K562 (cell line): ENCODE measurements at regions of chr11 and their contacts with region 1.

Region 1: GRCh38 chr11:118374729-118375128 is 15.3 kb downstream of the UBE4A start:
- DNase-seq: no peak
- ATAC-seq: no peak
- H3K4me3 ChIP-seq: no peak overlapping the region
- H3K27ac ChIP-seq: no peak overlapping the region
- H3K4me1 ChIP-seq: peaks cover 0 to 6% of the 10 kb centered on the region in 2 experiments; a peak in 2 of 5 replicates
- H3K27me3 ChIP-seq: no peaks in the 10 kb centered on the region
- CTCF ChIP-seq: no peak
- EP300 ChIP-seq: no peak
- POLR2A ChIP-seq: no peak
- RAD21 ChIP-seq: no peak

Region 2: DNA sequence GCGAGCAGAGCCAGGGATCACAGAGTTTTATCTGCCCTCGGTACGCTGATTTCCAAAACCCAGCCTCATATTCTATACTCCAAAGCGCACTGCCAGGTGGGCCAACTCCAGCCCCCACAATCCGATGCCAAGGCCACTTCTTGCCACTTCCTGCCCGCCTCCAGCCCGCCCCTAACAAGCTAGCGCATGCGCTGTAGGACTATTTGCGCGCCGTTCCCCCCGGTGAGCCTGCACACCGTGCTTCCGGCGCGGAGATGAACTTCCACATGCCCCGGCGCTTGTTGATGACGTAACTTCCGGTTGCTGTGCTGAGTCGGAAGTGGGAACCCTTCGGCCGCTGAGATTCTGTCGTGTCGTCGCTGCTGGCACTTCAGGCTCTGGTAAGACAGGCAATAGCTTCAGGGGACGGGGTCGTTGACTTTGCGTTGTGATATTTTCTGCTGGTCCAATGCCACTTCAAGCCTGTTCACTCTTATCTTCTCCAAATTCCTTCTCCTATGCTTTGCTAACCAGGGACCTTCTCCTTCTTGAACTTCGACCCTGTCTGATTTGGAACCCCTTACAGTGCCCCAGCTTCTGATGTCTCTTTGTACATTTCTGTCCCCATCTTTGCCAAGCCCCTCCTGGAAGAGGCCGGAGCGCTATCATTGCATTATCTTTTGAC is 15.3 kb before region 1 on chr11 and contains the start of gene UBE4A:
- CTCF ChIA-PET with region 1: no interaction called
- POLR2A ChIA-PET with region 1: interaction called, 16 read pairs
- in situ Hi-C with region 1: no loop called
- intact Hi-C with region 1: no loop called
- DNase-seq: peak; percentile 86 to 98 (median 88)
- ATAC-seq: peak; percentile 95
- H3K4me3 ChIP-seq: peak within 1 kb of the TSS; percentile 79
- H3K27ac ChIP-seq: peak within 1 kb of the TSS; percentile 77
- H3K4me1 ChIP-seq: peaks cover 4 to 5% of the 10 kb centered on the region in 2 experiments; a peak in 2 of 5 replicates
- H3K27me3 ChIP-seq: no peaks in the 10 kb centered on the region
- CTCF ChIP-seq: no peak; a peak in 1 of 6 replicates
- EP300 ChIP-seq: peak; percentile 28; the same call in 1 of the 2 replicates
- POLR2A ChIP-seq: peak; percentile 91
- RAD21 ChIP-seq: peak in 1 of 2 experiments; percentile 14; a peak in 2 of 4 replicates
- polyA plus RNA-seq, gene UBE4A: 13.5 to 17.1 TPM

Region 3: DNA sequence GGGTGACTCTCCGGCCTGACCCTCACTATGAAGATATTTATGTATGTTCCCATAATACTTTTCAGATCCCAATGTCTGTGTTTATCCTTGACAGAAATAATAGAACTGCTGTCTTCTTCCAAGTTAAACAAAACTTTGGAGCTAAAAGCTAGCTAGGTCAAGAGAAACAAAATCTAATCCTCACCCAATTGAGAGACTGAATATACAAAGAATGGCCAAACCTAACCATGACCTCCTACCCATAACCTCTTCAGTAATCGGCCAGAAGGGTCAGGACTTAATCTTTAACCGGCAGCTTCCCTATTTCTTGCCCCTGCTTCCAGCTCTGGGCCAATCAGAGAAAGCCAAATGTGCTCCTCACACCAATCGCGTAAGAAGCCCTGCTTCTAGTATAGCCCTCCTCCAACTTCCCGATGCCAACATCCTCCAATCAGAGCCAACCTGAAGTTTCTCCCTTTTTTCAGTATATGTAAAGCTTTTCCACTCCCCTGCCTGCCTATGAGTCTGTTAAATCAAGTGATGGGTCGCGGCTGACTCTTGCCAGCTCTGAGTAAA is 417.9 kb after region 1 on chr11:
- CTCF ChIA-PET with region 1: no interaction called
- POLR2A ChIA-PET with region 1: no interaction called
- in situ Hi-C with region 1: no loop called
- intact Hi-C with region 1: no loop called
- DNase-seq: peak; percentile 63 to 92 (median 78)
- ATAC-seq: peak; percentile 58
- H3K4me3 ChIP-seq: peak overlapping the region; percentile 90; the same call in 1 of the 2 replicates
- H3K27ac ChIP-seq: peak overlapping the region; percentile 96; the same call in 2 of the 3 replicates
- H3K4me1 ChIP-seq: peaks cover 3 to 18% of the 10 kb centered on the region in 2 experiments; a peak in 3 of 5 replicates
- H3K27me3 ChIP-seq: no peaks in the 10 kb centered on the region
- CTCF ChIP-seq: no peak
- EP300 ChIP-seq: peak; percentile 28; the same call in 1 of the 2 replicates
- POLR2A ChIP-seq: peak; percentile 78
- RAD21 ChIP-seq: no peak